Cardiac septum (tissue), 1 donor: ENCODE measurements at regions of chr2 and their contacts with region 1.

Region 1: DNA sequence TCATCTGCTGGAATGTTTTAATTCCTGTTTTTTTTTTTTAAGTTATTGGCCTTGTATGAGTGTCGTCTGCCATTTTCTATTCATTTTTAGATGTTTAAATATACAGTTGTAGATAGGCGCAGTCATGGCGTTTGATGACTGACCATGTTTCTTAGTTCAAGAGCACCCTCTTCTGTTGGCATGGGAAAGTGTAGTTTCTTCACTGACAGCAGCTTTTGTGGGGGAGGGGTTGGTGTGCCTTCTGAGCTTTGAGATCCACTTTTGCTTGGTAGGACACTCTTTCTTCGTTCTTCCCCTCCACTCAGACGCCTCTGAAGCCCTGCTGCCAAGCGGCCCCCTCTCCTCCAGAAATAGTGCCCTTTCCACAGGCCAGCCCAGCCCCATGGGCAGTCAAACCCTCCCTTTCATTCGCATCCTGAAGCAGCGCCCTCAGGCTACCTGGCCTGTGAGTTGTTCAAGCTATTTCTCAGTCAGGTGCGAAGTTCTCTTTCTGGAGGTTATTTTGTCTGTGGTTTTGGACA is 492.0 kb downstream of the TNS1 start:
- DNase-seq: no peak

Region 2: DNA sequence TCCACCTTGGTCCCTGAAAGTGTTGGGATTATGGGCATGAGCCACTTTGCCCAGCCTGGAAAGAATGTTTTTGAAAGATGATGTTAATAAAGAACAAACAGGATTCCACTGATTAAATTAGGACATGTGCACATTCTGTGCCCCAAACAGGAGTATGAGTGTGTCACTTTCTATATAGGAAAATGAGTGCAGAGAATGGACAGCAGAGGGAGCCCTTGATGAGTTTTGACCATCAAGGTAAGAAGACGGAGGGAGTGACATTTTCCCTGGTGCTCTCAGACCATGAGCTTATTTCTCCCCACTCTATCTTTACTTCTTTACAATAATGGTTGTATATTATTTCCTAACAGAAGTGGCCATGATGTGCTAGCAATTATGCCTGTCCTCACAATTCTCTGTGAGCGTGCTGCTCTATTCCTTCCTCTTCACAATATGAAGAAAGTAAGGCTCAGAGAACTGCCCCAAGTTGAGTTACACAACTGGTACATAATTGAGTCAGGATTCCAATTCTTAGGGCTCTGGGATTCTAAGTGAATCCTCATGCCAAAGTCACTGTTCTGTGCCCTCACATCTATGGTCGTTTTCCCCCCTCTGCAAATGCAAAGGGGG is 991.6 kb before region 1 on chr2:
- intact Hi-C with region 1: loop called (anchors 5 kb)
- DNase-seq: no peak

Region 3: GRCh38 chr2:216687646-216688045 is 823.2 kb before region 1 on chr2:
- intact Hi-C with region 1: loop called (anchors 1 kb)
- DNase-seq: peak; percentile 61

Region 4: DNA sequence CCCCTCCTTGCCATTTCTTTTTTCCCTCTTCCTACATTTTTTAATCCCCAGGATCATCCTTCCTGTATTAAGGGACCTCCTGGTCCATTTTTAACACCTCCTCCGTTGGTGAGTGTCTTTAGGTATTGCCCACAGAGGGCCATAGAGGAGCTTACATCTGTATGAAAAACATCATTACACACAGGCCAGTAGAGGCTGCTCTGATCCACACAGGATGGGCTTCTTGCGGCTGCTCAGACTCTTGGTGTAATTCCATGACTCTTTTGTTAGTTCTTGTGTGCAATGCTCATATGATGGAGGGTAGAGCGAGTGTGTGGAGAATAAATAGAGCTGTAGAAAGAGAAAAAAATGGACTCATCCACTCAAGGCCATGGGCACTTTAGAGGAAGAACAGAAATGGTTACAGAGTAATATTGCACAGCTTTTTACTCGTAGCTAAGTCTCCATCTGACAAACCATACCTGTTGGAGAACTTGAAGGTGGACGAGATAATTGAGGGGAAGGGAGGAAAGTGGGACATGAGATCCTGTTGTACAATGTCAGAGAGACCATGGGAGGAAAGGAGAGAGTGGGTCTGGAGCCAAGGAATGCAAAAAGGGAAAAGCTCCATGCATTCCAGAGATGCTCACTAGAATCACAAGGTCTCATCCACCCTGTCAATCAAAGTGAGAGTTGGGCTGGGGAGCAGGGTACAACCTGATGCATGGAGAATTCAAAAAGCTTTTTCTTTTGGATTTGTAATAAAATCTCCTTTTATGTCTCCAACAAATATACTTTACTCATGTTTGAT is 521.3 kb before region 1 on chr2:
- intact Hi-C with region 1: loop called (anchors 10 kb)
- DNase-seq: no peak

Region 5: DNA sequence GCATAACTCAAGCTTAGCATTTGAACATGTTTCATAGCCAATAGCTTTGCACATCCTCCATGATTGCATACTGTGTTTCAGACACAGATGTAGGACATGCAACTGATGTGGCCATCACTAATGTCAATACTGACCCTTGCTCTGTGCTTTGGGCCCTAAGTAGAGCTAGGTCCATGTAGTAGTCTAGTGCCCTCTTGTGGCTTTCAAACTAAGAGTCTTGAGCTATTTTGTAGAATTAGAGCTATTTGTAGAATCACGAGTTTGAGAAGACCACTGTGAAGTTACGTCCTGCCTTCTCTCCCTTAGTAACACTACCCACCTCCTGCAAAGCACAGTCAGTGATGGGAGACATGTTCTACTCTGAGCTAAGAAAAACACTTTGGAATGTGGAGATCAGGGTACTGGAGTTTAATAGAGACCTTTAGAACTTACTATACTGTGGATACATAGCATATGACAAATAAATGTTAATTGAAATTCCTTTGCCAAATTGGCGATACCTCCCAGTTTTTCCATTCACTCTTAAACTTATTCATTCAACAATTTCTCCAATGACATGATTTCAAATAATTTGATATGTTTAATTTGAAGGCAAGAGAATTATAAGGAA is 344.5 kb before region 1 on chr2:
- intact Hi-C with region 1: loop called (anchors 5 kb)
- DNase-seq: no peak

Region 6: DNA sequence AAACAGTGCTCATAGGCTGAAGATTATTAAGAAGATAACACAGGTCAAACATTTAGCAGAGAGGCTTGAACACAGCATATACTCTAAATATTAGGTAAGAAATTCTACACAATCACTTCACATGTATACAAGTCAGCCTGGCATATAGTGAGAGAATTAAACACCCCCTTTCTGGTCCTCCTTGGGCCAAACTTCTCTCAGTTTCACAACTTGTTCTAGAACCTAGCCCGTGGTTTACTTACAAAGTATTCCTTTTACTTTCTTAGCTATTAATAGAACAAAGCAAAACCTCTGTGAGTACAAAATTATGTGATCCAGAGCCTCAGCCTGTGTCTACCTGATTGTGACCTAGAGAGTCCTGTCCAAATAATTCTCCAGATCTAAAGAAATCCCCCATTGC is 70.8 kb before region 1 on chr2:
- intact Hi-C with region 1: no loop called
- DNase-seq: no peak

Region 7: DNA sequence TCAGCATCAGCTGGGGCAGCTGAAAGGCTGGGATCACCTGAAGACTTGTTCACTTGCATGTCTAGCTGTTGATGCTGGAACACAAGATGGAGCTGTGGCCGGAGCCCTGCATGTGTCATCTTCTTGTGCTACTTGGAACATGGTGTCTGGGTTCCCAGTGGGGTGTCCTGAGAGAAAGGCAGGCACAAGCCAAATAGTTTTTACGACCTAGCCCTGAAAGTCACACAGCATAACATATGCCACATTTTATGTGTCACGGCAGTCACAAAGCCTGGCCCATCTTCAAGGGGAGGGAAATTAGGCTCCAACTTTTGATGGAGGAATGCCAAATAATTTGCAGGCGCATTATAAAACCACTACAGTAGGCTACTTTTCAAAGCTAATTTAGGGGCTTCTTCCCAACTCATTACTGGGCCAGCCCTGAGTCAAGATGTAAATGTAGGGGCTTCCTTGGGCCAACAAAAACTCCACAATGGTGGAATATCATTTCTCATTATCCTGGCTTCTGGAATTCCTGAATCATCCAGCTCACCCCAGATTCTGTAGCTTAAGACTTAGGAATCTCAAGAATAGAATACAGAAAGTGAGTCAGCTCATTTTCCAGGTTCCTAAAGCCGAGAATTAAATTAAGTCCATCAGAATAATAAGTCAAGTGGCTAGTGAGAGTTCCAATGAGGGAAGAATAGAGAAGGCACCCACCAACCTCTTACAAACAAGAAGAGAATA is 51.0 kb before region 1 on chr2:
- intact Hi-C with region 1: no loop called
- DNase-seq: no peak

Region 8: DNA sequence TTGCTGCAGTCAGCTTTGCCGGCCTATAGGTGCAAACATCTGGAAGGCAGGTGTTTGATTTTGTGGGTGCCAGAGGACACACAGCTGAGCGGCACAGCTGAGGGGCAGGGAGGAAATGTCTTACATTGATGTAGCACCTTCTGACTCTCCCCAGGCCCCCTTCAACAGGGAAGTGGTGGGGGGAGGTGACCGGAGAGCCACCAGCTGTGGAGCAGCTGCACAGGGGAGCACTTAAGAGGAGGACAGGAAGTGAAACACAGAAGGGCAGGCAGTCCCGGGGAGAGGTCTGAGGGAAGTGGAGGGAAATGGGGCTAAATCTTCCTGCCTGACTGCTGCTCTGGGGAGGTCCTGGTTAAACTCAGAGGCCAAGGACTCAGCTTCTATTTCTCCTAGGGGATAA is 82.9 kb after region 1 on chr2:
- intact Hi-C with region 1: no loop called
- DNase-seq: no peak

Region 9: GRCh38 chr2:217685255-217685605 is 174.4 kb after region 1 on chr2:
- intact Hi-C with region 1: no loop called
- DNase-seq: no peak

Region 10: DNA sequence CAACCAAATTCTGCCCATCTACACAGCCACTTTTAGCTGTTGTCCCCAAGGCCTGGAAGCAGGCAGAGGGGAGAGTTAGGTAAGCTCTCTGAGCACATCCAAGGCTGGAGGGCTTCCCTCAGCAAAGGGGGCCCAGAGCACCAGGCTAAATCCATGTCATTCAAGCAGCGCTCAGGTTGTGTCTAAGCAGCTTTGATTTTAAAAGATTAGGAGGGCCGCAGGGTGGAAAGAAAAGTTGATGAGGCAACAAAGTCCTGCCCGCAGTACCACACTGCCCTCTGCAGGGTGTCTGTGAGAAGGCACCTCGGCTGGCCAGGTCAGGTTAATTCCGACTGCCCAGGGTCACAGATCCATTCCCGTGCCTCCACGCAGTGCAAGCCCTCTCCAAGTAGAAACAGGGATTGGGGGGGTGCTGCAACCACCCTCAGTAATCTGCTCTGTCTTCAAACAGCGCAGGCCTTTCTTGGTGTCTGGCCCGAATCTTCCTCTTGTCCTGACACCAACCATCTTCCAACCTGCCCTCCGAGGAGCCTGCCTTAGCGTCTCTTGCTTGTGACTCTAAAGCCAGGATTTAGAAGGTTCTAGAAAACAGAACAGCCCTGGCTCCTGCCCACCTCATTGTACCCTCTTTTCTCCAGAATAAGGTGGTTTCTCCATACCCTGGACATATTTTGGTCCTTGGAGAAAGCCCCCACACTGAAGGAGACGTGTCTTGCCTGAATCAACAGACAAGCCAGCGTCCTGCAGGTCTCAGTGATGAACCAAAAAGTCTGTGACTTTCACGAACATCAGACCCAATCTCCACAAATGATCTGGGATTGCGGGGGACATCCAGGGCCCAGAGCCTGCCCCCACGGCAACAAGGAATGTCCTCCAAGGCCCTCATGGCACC is 202.8 kb after region 1 on chr2:
- intact Hi-C with region 1: loop called (anchors 5 kb)
- DNase-seq: peak; percentile 83

Region 11: GRCh38 chr2:217756375-217757107 is 245.7 kb after region 1 on chr2:
- intact Hi-C with region 1: loop called (anchors 10 kb)
- DNase-seq: no peak